Activated T-helper 2 cell treated with anti-CD3 and anti-CD28 coated beads, Interferon-gamma antibody, Interleukin-2, Interleukin-4, amounts not matched to agents 10 μg/mL and 5 μg/mL and 100 μg/mL, durations not matched to agents 14 hours and 24 hours and 36 hours (primary cell): ENCODE measurements at regions of chr10 and their contacts with region 1.

Region 1: DNA sequence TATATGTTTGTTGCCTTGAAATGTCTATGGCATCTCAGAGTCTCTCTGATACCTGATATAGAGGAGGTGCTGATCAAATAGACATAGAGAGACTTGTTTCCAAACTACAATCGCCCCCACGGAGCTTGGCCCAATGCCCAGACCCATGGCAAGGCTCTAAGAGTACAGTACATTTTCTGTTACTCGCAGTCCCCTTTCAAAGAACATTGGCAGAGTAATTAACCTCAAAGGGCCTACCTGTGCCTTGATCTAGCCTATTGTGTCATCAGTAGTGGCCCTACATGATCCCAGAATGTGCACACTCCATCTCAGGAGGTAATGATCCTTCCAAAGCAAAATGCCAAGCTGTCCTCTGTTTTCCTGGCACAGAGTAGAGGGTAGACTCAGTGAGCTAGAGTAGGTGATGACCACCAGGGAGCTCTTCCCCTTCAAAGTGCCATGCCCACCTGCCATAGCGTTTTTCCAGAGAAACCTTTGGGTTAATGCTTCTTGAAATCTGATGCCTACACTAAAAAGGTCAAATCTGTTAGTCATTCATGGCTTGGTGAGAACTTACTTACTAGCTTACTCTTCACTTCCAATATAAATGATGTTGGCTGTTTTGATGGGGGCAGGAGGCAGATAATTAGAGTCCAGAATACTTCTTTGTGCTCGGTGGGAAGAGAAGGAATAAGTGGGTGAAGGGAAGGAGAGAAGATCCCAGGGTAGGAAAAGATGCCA is 41.2 kb upstream of the ACSL5 start:
- DNase-seq: no peak
- H3K4me3 Mint-ChIP-seq: no peak overlapping the region
- H3K27ac Mint-ChIP-seq: no peak overlapping the region
- H3K4me1 Mint-ChIP-seq: peaks cover 25% of the 10 kb centered on the region
- H3K27me3 Mint-ChIP-seq: peaks cover 10% of the 10 kb centered on the region

Region 2: DNA sequence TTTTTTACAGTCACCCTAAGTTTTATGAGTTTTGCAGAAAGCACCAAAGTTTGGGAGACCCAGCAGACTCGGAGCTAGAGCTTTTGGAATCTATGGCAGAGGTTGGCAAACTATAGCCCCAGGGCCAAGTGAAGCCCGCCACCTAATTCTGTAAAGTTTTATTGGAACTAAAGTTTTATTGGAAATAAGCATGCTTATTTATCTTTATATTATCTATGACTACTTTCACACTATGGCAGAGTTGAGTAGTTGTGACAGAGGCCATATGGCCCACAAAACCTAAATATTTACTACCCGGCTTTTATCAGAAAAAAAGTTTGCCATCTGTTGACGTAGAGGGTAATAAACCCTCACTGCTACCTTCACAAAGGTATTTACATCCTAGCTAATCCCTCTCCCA is 416.7 kb before region 1 on chr10:
- intact Hi-C with region 1: no loop called
- DNase-seq: no peak
- H3K4me3 Mint-ChIP-seq: no peak overlapping the region
- H3K27ac Mint-ChIP-seq: no peak overlapping the region
- H3K4me1 Mint-ChIP-seq: no peaks in the 10 kb centered on the region
- H3K27me3 Mint-ChIP-seq: no peaks in the 10 kb centered on the region

Region 3: DNA sequence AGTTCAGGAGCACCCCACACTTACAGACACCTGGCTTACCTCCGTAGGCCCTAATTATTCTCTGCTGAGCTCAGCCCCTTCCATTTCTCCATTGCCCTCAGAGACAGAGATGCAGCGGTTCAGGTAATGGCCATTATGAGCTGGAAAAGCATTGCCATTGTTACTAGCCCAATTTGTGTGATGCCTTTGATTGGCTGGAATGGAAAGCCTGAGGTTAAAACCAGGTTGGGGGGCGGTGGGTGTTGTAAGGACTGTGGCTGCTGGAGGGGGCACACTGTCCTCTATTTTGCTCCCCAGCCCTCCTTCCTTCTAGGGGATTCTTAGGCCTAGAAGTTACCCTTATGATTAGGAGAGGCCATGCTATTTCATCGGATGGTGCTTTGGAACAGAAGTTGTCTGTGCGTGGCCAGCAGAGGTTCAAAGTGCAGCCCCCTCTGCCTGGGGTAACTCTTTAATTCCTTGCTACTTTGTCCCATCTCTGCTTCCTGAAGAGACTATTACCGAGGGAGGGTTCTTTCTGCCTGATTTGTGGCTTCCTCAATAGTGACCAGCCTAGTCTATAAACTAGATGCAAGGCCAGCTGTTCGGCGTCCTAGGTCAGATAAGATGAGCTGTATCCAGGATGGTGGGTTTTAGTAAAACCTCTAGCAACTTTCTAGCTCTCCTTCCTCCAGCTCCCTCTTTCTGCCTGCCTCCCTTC is 27.1 kb after region 1 on chr10:
- intact Hi-C with region 1: no loop called
- DNase-seq: no peak
- H3K4me3 Mint-ChIP-seq: no peak overlapping the region
- H3K27ac Mint-ChIP-seq: no peak overlapping the region
- H3K4me1 Mint-ChIP-seq: no peaks in the 10 kb centered on the region
- H3K27me3 Mint-ChIP-seq: peaks cover 5% of the 10 kb centered on the region

Region 4: DNA sequence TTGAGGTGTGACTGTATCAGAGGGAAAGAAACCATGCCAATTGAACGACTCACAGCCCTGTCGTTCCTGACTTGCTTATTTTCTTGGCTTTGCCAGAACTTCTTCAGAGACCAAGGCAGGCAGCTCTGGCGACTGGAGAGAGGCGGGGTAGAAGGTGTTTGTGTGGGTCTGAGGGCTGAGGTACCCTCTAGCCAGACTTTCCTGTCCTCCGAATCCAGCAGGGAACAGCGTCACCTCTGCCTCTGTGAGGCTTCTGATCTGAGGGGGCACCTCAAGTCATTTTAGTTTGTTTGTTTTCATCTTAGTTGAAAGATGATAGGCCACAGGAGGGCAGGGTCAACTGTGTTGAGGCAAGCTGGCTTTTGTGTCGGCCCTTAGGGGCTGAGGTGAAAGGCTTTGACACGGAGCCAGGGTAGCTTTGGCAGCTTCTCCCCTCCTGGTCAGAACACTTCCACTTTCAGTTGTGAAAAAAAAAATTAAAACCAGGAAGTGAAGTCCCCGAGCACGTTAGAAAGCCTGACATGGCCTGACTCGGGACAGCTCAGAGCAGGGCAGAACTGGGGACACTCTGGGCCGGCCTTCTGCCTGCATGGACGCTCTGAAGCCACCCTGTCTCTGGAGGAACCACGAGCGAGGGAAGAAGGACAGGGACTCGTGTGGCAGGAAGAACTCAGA is 43.2 kb after region 1 on chr10:
- intact Hi-C with region 1: loop called (anchors 5 kb)
- DNase-seq: peak; percentile 47
- H3K4me3 Mint-ChIP-seq: peak overlapping the region; percentile 98
- H3K27ac Mint-ChIP-seq: peak overlapping the region; percentile 100
- H3K4me1 Mint-ChIP-seq: peaks cover 47% of the 10 kb centered on the region
- H3K27me3 Mint-ChIP-seq: no peaks in the 10 kb centered on the region